WTC11 (cell line): ENCODE measurements at regions of chr16 and their contacts with region 1.

Region 1: GRCh38 chr16:57091975-57092785 is at the start of gene CPNE2:
- DNase-seq: peak; percentile 42
- ATAC-seq: peak; percentile 35
- H3K4me3 Mint-ChIP-seq: peak within 1 kb of the TSS; percentile 86
- H3K27ac Mint-ChIP-seq: no peak within 1 kb of the TSS
- H3K4me1 Mint-ChIP-seq: peaks cover 14% of the 10 kb centered on the region
- H3K27me3 Mint-ChIP-seq: peaks cover 25% of the 10 kb centered on the region
- CTCF ChIP-seq: no peak
- total RNA-seq, gene CPNE2: 14.0 to 17.9 TPM (median 16.7 TPM) in 3 replicates

Region 2: GRCh38 chr16:57077714-57078113 is 14.5 kb before region 1 on chr16:
- CTCF ChIA-PET with region 1: interaction called, 20 read pairs
- POLR2A ChIA-PET with region 1: no interaction called
- DNase-seq: no peak
- ATAC-seq: no peak
- H3K4me3 Mint-ChIP-seq: no peak overlapping the region
- H3K27ac Mint-ChIP-seq: no peak overlapping the region
- H3K4me1 Mint-ChIP-seq: peaks cover 19% of the 10 kb centered on the region
- H3K27me3 Mint-ChIP-seq: peaks cover 19% of the 10 kb centered on the region
- CTCF ChIP-seq: no peak

Region 3: GRCh38 chr16:57115514-57116182 is 23.5 kb after region 1 on chr16:
- CTCF ChIA-PET with region 1: interaction called, 10 read pairs
- POLR2A ChIA-PET with region 1: no interaction called
- DNase-seq: no peak
- ATAC-seq: peak; percentile 59
- H3K4me3 Mint-ChIP-seq: no peak overlapping the region
- H3K27ac Mint-ChIP-seq: peak overlapping the region; percentile 86; the same call in 1 of the 2 replicates
- H3K4me1 Mint-ChIP-seq: peaks cover 8% of the 10 kb centered on the region
- H3K27me3 Mint-ChIP-seq: no peaks in the 10 kb centered on the region
- CTCF ChIP-seq: no peak

Region 4: GRCh38 chr16:57134982-57135381 is 42.8 kb after region 1 on chr16:
- CTCF ChIA-PET with region 1: interaction called, 16 read pairs
- POLR2A ChIA-PET with region 1: interaction called, 3 read pairs
- DNase-seq: no peak
- ATAC-seq: no peak
- H3K4me3 Mint-ChIP-seq: no peak overlapping the region
- H3K27ac Mint-ChIP-seq: no peak overlapping the region
- H3K4me1 Mint-ChIP-seq: peaks cover 8% of the 10 kb centered on the region; the same call in 1 of the 2 replicates
- H3K27me3 Mint-ChIP-seq: no peaks in the 10 kb centered on the region
- CTCF ChIP-seq: no peak

Region 5: GRCh38 chr16:57300387-57301125 is 208.4 kb after region 1 on chr16:
- CTCF ChIA-PET with region 1: interaction called, 11 read pairs
- POLR2A ChIA-PET with region 1: no interaction called
- DNase-seq: peak; percentile 99
- ATAC-seq: peak; percentile 85
- H3K4me3 Mint-ChIP-seq: no peak overlapping the region
- H3K27ac Mint-ChIP-seq: no peak overlapping the region
- H3K4me1 Mint-ChIP-seq: peaks cover 16% of the 10 kb centered on the region
- H3K27me3 Mint-ChIP-seq: peaks cover 13% of the 10 kb centered on the region
- CTCF ChIP-seq: peak; percentile 83